GM23248 (cell line): ENCODE measurements at regions of chr2 and their contacts with region 1.

Region 1: DNA sequence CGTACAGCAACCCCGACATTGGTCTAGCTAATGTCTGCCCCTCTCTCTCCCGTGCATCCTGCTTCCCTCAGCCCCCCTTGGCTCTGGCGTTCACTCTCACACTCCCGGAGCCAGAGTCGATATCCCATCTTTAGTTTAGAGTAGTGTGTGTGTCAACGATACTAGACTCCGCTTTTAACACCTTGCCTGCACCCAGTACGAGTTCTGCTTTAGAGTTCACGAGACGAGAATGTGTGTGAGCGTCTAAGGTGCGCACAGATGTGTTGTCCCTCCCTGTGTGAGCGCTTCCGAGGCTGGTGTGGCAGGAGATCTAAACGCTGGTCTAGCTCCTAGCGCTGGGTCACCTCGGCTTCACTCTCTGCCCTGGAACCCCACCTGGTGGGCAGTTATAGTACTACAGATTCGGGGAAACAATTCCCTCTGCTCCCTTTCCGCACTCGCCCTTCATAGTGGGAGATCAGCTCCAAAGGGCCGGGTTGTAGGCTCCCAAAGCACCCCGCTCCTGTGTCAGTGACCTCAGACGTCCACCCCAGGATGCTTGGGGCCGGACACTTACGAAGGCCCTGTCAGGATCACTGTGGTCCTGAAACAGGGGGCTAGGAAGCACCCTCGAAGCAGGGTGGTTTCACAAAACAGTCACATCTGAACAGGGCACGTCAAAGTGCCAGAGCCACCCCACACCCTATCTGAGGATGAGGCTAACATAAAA is 2.6 kb upstream of the CYP26B1 start:
- DNase-seq: peak; percentile 84
- H3K4me3 ChIP-seq: peak overlapping the region; percentile 71
- H3K27ac ChIP-seq: no peak overlapping the region
- H3K4me1 ChIP-seq: peaks cover 5% of the 10 kb centered on the region
- H3K27me3 ChIP-seq: peaks cover 40% of the 10 kb centered on the region

Region 2: DNA sequence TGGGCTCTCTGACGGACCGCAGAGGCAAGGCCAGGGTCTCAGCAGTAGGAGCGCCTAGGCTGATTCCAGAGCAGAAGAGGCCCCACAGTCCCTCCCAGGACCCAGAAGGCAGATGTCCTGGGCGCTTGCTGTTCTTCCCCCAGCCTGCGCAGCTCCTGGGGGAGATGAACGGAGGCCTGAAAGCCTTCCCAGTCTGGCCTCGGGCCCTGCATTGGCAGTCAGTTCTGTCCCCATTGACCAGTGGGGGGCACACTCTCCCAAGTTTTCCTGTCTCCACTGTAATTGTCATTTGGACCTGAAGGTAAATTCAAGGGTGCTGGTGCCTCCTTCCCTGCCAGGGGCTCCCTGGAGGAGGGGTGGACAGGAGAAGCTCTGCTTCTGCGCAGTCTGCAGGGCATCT is 348.3 kb before region 1 on chr2:
- in situ Hi-C with region 1: loop called (anchors 10 kb)
- DNase-seq: peak; percentile 79
- H3K4me3 ChIP-seq: no peak overlapping the region
- H3K27ac ChIP-seq: no peak overlapping the region
- H3K4me1 ChIP-seq: no peaks in the 10 kb centered on the region
- H3K27me3 ChIP-seq: no peaks in the 10 kb centered on the region

Region 3: GRCh38 chr2:72731116-72731515 is 580.8 kb after region 1 on chr2:
- in situ Hi-C with region 1: no loop called
- DNase-seq: no peak
- H3K4me3 ChIP-seq: no peak overlapping the region
- H3K27ac ChIP-seq: no peak overlapping the region
- H3K4me1 ChIP-seq: no peaks in the 10 kb centered on the region
- H3K27me3 ChIP-seq: no peaks in the 10 kb centered on the region